HEK293 (cell line): ENCODE measurements at regions of chr15 and their contacts with region 1.

Region 1: GRCh38 chr15:101008158-101009139 is 89.3 kb downstream of the LRRK1 start:
- H3K4me3 ChIP-seq: peak overlapping the region; percentile 57
- H3K27ac ChIP-seq: no peak overlapping the region; the same call in 1 of the 2 replicates
- H3K4me1 ChIP-seq: peaks cover 5% of the 10 kb centered on the region; the same call in 1 of the 2 replicates
- CTCF ChIP-seq: peak; percentile 97

Region 2: GRCh38 chr15:100572362-100572983 is 436.0 kb before region 1 on chr15:
- CTCF ChIA-PET with region 1: interaction called, 15 read pairs
- POLR2A ChIA-PET with region 1: no interaction called
- H3K4me3 ChIP-seq: no peak overlapping the region
- H3K27ac ChIP-seq: no peak overlapping the region
- H3K4me1 ChIP-seq: no peaks in the 10 kb centered on the region
- CTCF ChIP-seq: no peak

Region 3: DNA sequence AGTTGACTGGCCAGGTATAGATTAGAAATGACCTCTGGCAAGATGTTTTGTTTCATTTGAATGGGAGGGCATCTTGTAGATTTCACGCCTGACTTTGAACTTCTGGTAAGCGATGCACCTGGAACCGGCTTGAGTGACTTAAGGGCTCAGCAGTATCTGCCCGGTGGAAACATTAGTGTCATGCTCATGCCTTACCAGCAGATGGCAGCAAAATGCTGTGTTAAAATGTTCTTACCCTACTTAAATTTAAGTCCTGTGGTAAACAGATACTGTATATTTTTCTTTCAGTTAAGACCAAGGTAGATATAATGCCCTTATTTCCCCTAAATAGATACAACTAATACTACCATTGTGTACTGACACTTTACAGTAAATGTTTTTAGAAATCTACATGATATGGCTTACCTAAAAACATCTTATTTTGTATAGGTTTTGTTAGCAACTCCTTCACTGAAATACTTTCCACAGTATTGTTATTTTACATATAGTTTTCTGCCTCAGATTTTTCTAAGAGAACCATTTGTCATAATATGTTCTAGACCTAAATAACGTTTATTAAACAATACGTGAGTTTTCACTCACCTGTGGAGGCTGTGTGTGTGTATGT is 380.6 kb before region 1 on chr15:
- CTCF ChIA-PET with region 1: interaction called, 44 read pairs
- POLR2A ChIA-PET with region 1: no interaction called
- H3K4me3 ChIP-seq: no peak overlapping the region
- H3K27ac ChIP-seq: no peak overlapping the region
- H3K4me1 ChIP-seq: no peaks in the 10 kb centered on the region
- CTCF ChIP-seq: no peak

Region 4: GRCh38 chr15:100873029-100873677 is 135.3 kb before region 1 on chr15:
- CTCF ChIA-PET with region 1: interaction called, 24 read pairs
- POLR2A ChIA-PET with region 1: no interaction called
- H3K4me3 ChIP-seq: no peak overlapping the region
- H3K27ac ChIP-seq: no peak overlapping the region
- H3K4me1 ChIP-seq: no peaks in the 10 kb centered on the region
- CTCF ChIP-seq: 0 out of 2 replicates have a peak, but pooled peaks have one; percentile 22

Region 5: DNA sequence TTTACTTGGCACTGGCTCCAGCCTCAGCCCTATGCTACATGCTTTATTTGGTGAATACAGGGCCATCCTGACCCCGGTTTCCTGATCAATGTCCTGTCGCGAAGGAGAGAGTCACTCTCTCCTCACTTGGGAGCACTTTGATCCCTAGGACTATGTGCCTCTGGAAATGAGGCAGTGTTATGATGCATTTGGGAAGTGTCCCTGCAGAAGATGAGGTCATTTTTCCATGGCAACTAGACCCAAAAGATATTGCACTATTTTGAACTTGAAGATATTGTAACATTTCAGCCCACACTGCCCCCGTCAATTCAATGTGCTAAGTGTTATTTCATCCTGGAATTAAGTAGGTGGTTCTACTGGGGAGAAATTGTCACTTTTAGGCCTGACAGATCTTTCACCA is 21.3 kb before region 1 on chr15:
- CTCF ChIA-PET with region 1: interaction called, 26 read pairs
- POLR2A ChIA-PET with region 1: no interaction called
- H3K4me3 ChIP-seq: no peak overlapping the region
- H3K27ac ChIP-seq: no peak overlapping the region
- H3K4me1 ChIP-seq: no peaks in the 10 kb centered on the region
- CTCF ChIP-seq: no peak

Region 6: GRCh38 chr15:101251830-101252820 is 243.7 kb after region 1 on chr15 and contains the start of gene CHSY1:
- CTCF ChIA-PET with region 1: interaction called, 223 read pairs
- POLR2A ChIA-PET with region 1: interaction called, 9 read pairs
- H3K4me3 ChIP-seq: peak within 1 kb of the TSS; percentile 85
- H3K27ac ChIP-seq: peak within 1 kb of the TSS; percentile 86; the same call in 1 of the 2 replicates
- H3K4me1 ChIP-seq: peaks cover 17% of the 10 kb centered on the region
- CTCF ChIP-seq: no peak